Caco-2 (cell line): ENCODE measurements at regions of chr10 and their contacts with region 1.

Region 1: GRCh38 chr10:100286051-100287033 is at the start of gene BLOC1S2:
- DNase-seq: peak; percentile 83 to 95
- H3K4me3 ChIP-seq: peak within 1 kb of the TSS; percentile 97
- H3K4me3 Mint-ChIP-seq: peak within 1 kb of the TSS; percentile 99
- H3K27ac Mint-ChIP-seq: peak within 1 kb of the TSS; percentile 94
- H3K4me1 ChIP-seq: peaks cover 9% of the 10 kb centered on the region
- H3K4me1 Mint-ChIP-seq: peaks cover 15% of the 10 kb centered on the region
- H3K27me3 ChIP-seq: no peaks in the 10 kb centered on the region
- H3K27me3 Mint-ChIP-seq: no peaks in the 10 kb centered on the region
- CTCF ChIP-seq: no peak
- total RNA-seq, gene BLOC1S2: 51.9 and 52.8 TPM in 2 replicates

Region 2: GRCh38 chr10:100245484-100246220 is 40.7 kb before region 1 on chr10:
- CTCF ChIA-PET with region 1: no interaction called
- POLR2A ChIA-PET with region 1: no interaction called
- intact Hi-C with region 1: no loop called
- DNase-seq: no peak
- H3K4me3 ChIP-seq: no peak overlapping the region
- H3K4me3 Mint-ChIP-seq: no peak overlapping the region
- H3K27ac Mint-ChIP-seq: peak overlapping the region; percentile 37
- H3K4me1 ChIP-seq: peaks cover 22% of the 10 kb centered on the region
- H3K4me1 Mint-ChIP-seq: peaks cover 7% of the 10 kb centered on the region
- H3K27me3 ChIP-seq: no peaks in the 10 kb centered on the region
- H3K27me3 Mint-ChIP-seq: no peaks in the 10 kb centered on the region
- CTCF ChIP-seq: no peak

Region 3: DNA sequence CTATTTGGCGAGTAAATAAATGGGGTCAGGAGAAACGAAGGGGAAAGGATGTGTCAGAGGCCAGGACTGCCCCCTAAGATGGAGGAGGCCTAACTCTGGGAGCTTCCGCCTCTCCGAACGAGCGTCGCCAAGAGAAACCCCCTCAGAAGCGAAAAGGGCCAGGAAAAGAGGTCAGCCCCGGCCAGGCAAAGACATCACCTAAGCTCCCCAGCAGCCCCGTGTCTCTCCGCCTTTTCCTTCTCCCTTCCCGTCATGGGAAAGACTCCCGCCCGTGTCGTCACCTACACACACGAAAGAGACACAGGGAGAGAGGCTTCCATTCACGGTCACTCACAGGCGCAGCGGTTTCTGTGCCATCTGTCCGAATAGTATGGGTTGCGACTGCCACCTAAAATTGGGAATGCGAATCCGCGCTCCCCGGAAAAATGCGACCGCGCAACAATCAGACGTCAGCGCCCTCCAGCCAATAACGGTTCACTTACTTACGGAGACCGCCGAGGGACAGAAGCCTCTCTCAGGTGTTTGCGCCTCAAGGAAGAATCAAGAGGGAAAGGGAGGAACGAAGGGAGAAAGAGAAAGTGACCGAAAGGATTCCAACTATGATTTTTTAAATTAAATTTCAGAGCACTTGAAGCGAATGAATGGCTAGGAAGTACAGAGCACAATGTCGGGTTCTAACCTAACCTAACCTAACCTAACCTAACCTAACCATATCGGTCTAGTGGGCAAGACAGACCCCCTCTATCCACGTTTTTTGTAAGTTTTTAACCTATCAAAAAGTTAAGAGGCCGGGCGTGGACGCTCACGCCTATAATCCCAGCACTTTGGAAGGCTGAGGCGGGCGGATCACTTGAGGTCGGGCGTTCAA is 18.9 kb before region 1 on chr10 and contains the start of gene CWF19L1:
- CTCF ChIA-PET with region 1: no interaction called
- POLR2A ChIA-PET with region 1: no interaction called
- intact Hi-C with region 1: loop called (anchors 1 kb)
- DNase-seq: peak; percentile 90 to 91
- H3K4me3 ChIP-seq: peak within 1 kb of the TSS; percentile 89
- H3K4me3 Mint-ChIP-seq: peak within 1 kb of the TSS; percentile 99
- H3K27ac Mint-ChIP-seq: peak within 1 kb of the TSS; percentile 99
- H3K4me1 ChIP-seq: no peaks in the 10 kb centered on the region
- H3K4me1 Mint-ChIP-seq: peaks cover 6% of the 10 kb centered on the region
- H3K27me3 ChIP-seq: no peaks in the 10 kb centered on the region
- H3K27me3 Mint-ChIP-seq: no peaks in the 10 kb centered on the region
- CTCF ChIP-seq: no peak
- total RNA-seq, gene CWF19L1: 41.1 and 41.2 TPM in 2 replicates